AG04449 (cell line): ENCODE measurements at regions of chr14 and their contacts with region 1.

Region 1: DNA sequence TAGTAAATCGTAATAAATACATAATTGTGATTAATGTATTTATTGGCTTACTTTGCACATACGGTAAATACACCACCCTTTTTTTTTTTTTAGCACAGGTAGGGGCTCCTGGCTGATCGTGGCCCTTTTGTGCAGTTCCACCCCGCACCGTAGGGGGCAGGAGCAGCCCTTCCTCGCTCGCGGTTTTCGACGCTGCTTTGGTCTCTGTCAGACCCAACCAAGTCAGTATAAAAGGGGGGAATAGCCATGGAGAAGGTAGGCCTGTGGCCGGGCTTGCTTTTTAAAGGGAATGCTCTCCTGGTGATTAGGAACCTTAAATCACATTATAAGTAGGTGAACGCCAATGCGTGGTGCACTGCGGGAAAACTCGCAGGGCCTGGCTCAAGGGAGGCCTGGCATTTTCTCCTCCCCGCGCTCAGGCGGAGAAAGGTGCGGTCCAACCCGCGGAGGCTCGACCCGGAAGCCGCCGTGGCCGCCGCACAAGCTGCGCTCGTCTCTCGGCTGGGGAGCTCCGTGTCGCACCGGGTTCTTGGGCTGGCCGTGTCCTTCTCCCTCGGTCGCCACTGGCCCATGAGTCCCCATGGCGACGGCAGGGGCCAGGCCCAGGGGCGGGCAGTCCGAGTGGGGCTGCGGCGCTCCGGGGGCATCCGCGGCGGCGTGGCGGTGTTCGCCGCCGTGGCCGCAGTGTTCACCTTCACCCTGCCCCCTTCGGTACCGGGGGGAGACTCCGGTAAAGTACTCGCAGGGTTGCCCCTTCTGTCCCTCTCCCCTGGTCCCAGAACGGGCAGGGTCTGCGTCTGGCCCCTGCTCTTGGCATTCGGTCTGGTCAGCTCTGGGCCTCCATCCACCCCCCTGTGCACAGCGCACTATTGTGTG is at the start of gene TMEM260:
- DNase-seq: peak; percentile 36
- H3K4me3 ChIP-seq: peak within 1 kb of the TSS; percentile 93
- CTCF ChIP-seq: peak; percentile 93

Region 2: DNA sequence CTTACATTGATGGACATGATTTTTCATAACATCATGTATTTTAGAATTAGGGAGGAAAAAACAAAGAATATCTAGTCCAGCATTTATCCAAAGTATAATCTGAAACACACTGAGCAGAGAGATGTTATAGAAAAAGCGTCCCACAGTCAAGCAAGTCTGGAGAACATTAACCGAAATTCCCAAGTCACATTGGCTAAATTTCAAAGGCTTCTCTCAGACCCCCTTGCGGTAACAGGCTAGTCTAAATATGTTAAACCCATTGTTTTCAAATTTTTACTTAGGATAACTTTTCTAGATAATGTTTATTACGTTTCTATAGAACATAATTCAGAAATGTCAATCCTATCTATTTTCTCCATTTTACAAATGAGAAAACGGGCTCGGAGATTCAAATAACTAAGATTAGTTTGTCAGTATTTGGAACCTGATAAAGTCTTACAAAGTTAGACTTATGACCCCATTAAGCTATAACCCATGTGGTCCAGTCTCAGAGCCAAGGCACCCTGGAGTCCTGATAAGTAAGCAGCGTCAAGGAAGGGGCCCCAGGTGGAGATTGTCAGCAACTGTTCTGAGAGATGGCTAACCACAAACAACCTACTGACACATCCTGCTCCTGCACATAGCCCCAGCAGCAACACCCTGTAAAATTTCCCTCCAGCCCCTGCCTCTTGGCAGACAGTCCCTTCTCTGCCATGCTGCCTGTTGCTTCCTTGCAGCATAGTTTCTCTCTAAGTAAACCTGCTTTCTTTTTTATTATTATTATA is 220.6 kb before region 1 on chr14:
- CTCF ChIA-PET with region 1: no interaction called
- POLR2A ChIA-PET with region 1: no interaction called
- DNase-seq: no peak
- H3K4me3 ChIP-seq: no peak overlapping the region
- CTCF ChIP-seq: no peak

Region 3: DNA sequence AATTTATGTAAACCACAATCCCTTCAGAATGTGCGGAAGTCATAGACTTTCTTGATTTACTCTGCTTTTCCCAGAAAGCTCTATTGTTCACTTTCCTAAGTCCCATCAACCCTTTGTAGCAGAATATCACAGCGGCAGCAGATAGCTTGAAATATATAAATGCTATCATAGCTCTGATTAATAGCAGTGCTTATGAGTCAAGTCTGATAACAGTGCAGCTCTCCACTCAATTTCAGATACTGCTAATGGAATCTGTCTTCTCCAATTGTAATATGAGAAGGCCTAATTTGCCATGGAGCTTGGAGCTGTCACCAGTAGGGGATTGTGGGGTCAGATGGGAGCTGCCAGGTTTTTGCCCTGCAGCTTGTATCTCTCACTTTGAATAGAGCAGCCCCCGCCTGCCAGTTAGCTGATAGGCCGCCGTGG is 11.0 kb after region 1 on chr14:
- CTCF ChIA-PET with region 1: interaction called, 35 read pairs
- POLR2A ChIA-PET with region 1: no interaction called
- DNase-seq: no peak
- H3K4me3 ChIP-seq: no peak overlapping the region
- CTCF ChIP-seq: no peak